ENCODE measurements at regions of chr20 and their contacts with region 1.

Region 1: GRCh38 chr20:478949-479429 is 16.7 kb upstream of the TBC1D20 start:
- DNase-seq: peak in 1 of 2 experiments; percentile 59
- H3K4me3 ChIP-seq: no peak overlapping the region
- H3K4me3 Mint-ChIP-seq: no peak overlapping the region
- H3K27ac Mint-ChIP-seq: no peak overlapping the region
- H3K4me1 ChIP-seq: no peaks in the 10 kb centered on the region
- H3K4me1 Mint-ChIP-seq: peaks cover 9% of the 10 kb centered on the region
- H3K27me3 ChIP-seq: no peaks in the 10 kb centered on the region
- H3K27me3 Mint-ChIP-seq: no peaks in the 10 kb centered on the region
- CTCF ChIP-seq: peak; percentile 45 to 48

Region 2: GRCh38 chr20:354298-355064 is 124.5 kb before region 1 on chr20:
- CTCF ChIA-PET with region 1: interaction called, 4 read pairs
- POLR2A ChIA-PET with region 1: no interaction called
- intact Hi-C with region 1: loop called (anchors 1 kb)
- DNase-seq: peak; percentile 82 to 89
- H3K4me3 ChIP-seq: no peak overlapping the region
- H3K4me3 Mint-ChIP-seq: no peak overlapping the region
- H3K27ac Mint-ChIP-seq: peak overlapping the region; percentile 63
- H3K4me1 ChIP-seq: peaks cover 26% of the 10 kb centered on the region
- H3K4me1 Mint-ChIP-seq: peaks cover 23% of the 10 kb centered on the region
- H3K27me3 ChIP-seq: no peaks in the 10 kb centered on the region
- H3K27me3 Mint-ChIP-seq: no peaks in the 10 kb centered on the region
- CTCF ChIP-seq: peak; percentile 95 to 97

Region 3: GRCh38 chr20:462199-462991 is 16.6 kb before region 1 on chr20 and contains the start of gene TBC1D20:
- CTCF ChIA-PET with region 1: no interaction called
- POLR2A ChIA-PET with region 1: no interaction called
- intact Hi-C with region 1: loop called (anchors 2 kb)
- DNase-seq: peak; percentile 84 to 91
- H3K4me3 ChIP-seq: peak within 1 kb of the TSS; percentile 74
- H3K4me3 Mint-ChIP-seq: peak within 1 kb of the TSS; percentile 98
- H3K27ac Mint-ChIP-seq: peak within 1 kb of the TSS; percentile 94
- H3K4me1 ChIP-seq: peaks cover 15% of the 10 kb centered on the region
- H3K4me1 Mint-ChIP-seq: peaks cover 15% of the 10 kb centered on the region
- H3K27me3 ChIP-seq: no peaks in the 10 kb centered on the region
- H3K27me3 Mint-ChIP-seq: no peaks in the 10 kb centered on the region
- CTCF ChIP-seq: no peak
- total RNA-seq, gene TBC1D20: 30.0 and 35.8 TPM in 2 replicates